Naive thymus-derived CD8-positive, alpha-beta T cell (primary cell): ENCODE measurements at regions of chr11 and their contacts with region 1.

Region 1: GRCh38 chr11:250740-251299 is 14.0 kb downstream of the PSMD13 start:
- DNase-seq: peak; percentile 74 to 91 (median 84)
- ATAC-seq: peak; percentile 99 to 100
- H3K4me3 Mint-ChIP-seq: peak overlapping the region in 2 of 10 donors; percentile 23 to 37
- H3K27ac Mint-ChIP-seq: peak overlapping the region in 9 of 10 donors; percentile 67 to 96 (median 88)
- H3K4me1 Mint-ChIP-seq: peaks cover 9 to 20% (median 10%) of the 10 kb centered on the region in 4 donors
- H3K27me3 Mint-ChIP-seq: no peaks in the 10 kb centered on the region

Region 2: GRCh38 chr11:196786-197719 is 53.8 kb before region 1 on chr11:
- POLR2A ChIA-PET with region 1: no interaction called
- DNase-seq: peak in 1 of 10 donors; percentile 12
- ATAC-seq: no peak
- H3K4me3 Mint-ChIP-seq: no peak overlapping the region
- H3K27ac Mint-ChIP-seq: no peak overlapping the region
- H3K4me1 Mint-ChIP-seq: peaks cover 7 to 12% (median 12%) of the 10 kb centered on the region in 4 donors
- H3K27me3 Mint-ChIP-seq: no peaks in the 10 kb centered on the region

Region 3: DNA sequence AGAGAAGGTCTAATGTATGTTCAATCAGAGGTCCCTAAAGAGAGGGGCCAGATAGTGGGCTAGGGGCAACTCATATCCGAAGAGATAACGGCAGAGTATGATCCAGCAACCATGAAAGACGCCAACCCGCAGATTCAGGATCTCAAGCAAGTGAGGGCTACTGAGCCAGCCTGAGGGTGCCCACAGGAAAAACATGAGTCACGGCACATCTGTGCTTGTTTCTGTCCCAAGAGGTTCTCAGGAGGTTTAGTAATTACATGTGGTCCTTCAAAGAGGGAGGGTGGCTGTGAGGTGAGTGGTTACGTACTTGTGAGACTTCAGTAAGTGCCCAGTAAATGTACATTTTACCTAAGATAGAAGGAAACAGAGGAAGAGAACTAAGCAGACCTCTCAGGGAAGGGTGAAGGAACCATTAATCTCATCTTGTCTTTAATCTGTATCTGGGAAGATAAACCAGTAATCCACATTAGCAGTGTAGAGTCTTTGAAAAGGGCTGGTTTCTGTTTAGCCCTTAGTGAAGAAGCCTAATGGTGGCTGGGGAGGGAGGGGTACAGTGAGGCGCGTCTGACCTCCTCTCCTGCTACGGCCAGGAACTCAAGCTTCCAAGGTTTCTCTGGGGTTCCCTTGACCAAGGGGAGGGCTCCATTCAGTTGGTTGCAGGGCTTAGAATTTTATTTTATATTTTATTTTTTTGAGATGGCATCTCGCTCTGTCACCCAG is 24.9 kb before region 1 on chr11:
- POLR2A ChIA-PET with region 1: no interaction called
- DNase-seq: no peak
- ATAC-seq: no peak
- H3K4me3 Mint-ChIP-seq: no peak overlapping the region
- H3K27ac Mint-ChIP-seq: peak overlapping the region in 1 of 10 donors; percentile 22
- H3K4me1 Mint-ChIP-seq: peaks cover 4 to 17% (median 11%) of the 10 kb centered on the region in 4 donors
- H3K27me3 Mint-ChIP-seq: no peaks in the 10 kb centered on the region

Region 4: GRCh38 chr11:236774-237767 is 13.7 kb before region 1 on chr11 and contains the start of gene PSMD13:
- POLR2A ChIA-PET with region 1: interaction called, 15 read pairs
- DNase-seq: peak; percentile 82 to 91 (median 86)
- ATAC-seq: peak; percentile 80 to 83
- H3K4me3 Mint-ChIP-seq: peak within 1 kb of the TSS; percentile 93 to 99 (median 98)
- H3K27ac Mint-ChIP-seq: peak within 1 kb of the TSS; percentile 89 to 100 (median 100)
- H3K4me1 Mint-ChIP-seq: peaks cover 20 to 61% (median 46%) of the 10 kb centered on the region in 4 donors
- H3K27me3 Mint-ChIP-seq: no peaks in the 10 kb centered on the region
- polyA plus RNA-seq, gene PSMD13: 196 to 223 (median 208) TPM

Region 5: GRCh38 chr11:293847-294661 is 43.2 kb after region 1 on chr11:
- POLR2A ChIA-PET with region 1: interaction called, 229 read pairs
- DNase-seq: peak in 2 of 10 donors; percentile 14 to 50
- ATAC-seq: no peak
- H3K4me3 Mint-ChIP-seq: no peak overlapping the region
- H3K27ac Mint-ChIP-seq: peak overlapping the region in 2 of 10 donors; percentile 15 to 52
- H3K4me1 Mint-ChIP-seq: peaks cover 27 to 53% (median 39%) of the 10 kb centered on the region in 4 donors
- H3K27me3 Mint-ChIP-seq: no peaks in the 10 kb centered on the region

Region 6: GRCh38 chr11:299951-300735 is 49.3 kb after region 1 on chr11:
- POLR2A ChIA-PET with region 1: interaction called, 11 read pairs
- DNase-seq: peak in 5 of 10 donors; percentile 55 to 75 (median 57)
- ATAC-seq: peak; percentile 19 to 53
- H3K4me3 Mint-ChIP-seq: peak overlapping the region in 4 of 10 donors; percentile 12 to 48 (median 45)
- H3K27ac Mint-ChIP-seq: peak overlapping the region in 6 of 10 donors; percentile 38 to 81 (median 60)
- H3K4me1 Mint-ChIP-seq: peaks cover 18 to 62% (median 57%) of the 10 kb centered on the region in 4 donors
- H3K27me3 Mint-ChIP-seq: peaks cover 0 to 2% (median 0%) of the 10 kb centered on the region in 5 donors

Region 7: DNA sequence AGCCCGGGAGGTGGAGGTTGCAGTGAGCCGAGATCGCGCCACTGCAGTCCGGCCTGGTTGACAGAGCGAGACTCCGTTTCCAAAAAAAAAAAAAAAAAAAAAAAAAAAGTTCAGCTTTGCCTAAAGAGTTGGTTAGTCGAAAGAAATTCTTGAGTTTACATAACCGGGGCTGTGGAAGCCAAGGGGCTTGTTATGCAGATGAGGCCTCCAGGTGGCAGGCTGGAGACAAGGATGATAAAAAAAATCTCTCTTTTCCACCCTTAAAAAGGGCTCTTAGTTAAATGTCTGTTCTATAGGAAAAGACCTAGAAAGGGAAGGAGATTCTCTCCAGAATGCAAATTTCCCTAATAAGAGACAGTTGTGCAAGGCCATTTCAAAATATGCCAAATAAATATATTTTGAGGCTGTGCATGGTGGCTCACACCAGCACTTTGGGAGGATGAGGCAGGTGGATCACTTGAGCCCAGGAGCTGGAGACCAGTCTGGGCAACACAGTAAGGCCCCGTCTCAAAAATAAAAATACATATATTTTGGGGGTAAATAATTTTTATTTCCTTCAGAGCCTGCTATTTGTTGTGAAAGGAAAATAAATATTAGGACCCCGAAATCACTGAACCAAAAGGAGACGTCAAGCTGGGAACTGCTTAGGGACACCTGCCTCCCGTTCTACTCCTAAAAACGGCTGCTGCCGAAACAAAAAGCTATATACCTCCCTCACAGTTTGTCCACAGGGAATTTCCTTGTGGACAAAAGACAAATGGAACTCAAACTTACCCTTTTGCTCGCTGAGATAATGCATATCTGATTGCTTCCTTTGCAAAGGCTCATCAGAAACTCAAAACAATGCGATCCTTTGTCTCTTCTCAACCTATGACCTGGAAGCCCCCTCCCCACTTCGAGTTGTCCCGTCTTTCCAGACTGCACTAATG is 54.4 kb after region 1 on chr11:
- POLR2A ChIA-PET with region 1: interaction called, 11 read pairs
- DNase-seq: peak in 8 of 10 donors; percentile 59 to 86 (median 71)
- ATAC-seq: peak; percentile 11 to 30
- H3K4me3 Mint-ChIP-seq: peak overlapping the region in 7 of 10 donors; percentile 30 to 72 (median 36)
- H3K27ac Mint-ChIP-seq: peak overlapping the region; percentile 48 to 97 (median 88)
- H3K4me1 Mint-ChIP-seq: peaks cover 32 to 74% (median 63%) of the 10 kb centered on the region in 4 donors
- H3K27me3 Mint-ChIP-seq: peaks cover 0 to 2% (median 0%) of the 10 kb centered on the region in 5 donors